Heart right ventricle (tissue), 16 donors: ENCODE measurements at regions of chr18 and their contacts with region 1.

Region 1: DNA sequence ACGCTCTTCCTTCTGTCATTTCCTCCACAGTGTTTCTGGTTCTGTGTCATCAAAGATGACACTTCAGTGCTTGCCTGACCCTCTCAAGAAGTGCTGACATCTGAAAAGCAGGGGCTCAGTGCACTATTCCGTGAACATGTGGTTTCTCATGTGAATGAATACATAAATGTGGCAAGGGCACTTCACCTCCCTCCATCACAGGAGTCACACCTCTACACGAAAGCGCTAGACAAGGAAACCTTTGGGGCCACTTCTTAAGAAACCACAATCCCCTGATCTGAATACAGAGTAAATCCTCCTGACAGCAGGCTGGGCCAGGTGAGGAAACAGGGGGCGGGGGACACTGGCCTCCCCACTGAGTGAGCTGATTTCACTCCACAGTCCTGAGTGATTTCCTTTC is 145.8 kb upstream of the ACAA2 start:
- DNase-seq: no peak
- ATAC-seq: no peak
- H3K4me3 ChIP-seq: no peak overlapping the region
- H3K27ac ChIP-seq: no peak overlapping the region
- H3K4me1 ChIP-seq: no peaks in the 10 kb centered on the region
- H3K27me3 ChIP-seq: peaks cover 0 to 13% (median 4%) of the 10 kb centered on the region in 7 donors
- CTCF ChIP-seq: no peak

Region 2: GRCh38 chr18:50183556-50183955 is 224.4 kb after region 1 on chr18:
- intact Hi-C with region 1: loop called in 1 of 10 experiments (anchors 10 kb)
- DNase-seq: no peak
- ATAC-seq: no peak
- H3K4me3 ChIP-seq: no peak overlapping the region
- H3K27ac ChIP-seq: no peak overlapping the region
- H3K4me1 ChIP-seq: no peaks in the 10 kb centered on the region
- H3K27me3 ChIP-seq: peaks cover 0 to 54% (median 24%) of the 10 kb centered on the region in 7 donors
- CTCF ChIP-seq: no peak